ENCODE measurements at regions of chr1 and their contacts with region 1.

Region 1: GRCh38 chr1:8987881-8988617 is 38.2 kb downstream of the SLC2A7 start:
- DNase-seq: peak; percentile 28 to 73 (median 67)
- H3K4me3 ChIP-seq: no peak overlapping the region
- H3K27ac ChIP-seq: no peak overlapping the region
- H3K4me1 ChIP-seq: peaks cover 4% of the 10 kb centered on the region
- H3K27me3 ChIP-seq: no peaks in the 10 kb centered on the region
- CTCF ChIP-seq: peak; percentile 73 to 82 (median 77)
- EP300 ChIP-seq: no peak
- POLR2A ChIP-seq: no peak

Region 2: DNA sequence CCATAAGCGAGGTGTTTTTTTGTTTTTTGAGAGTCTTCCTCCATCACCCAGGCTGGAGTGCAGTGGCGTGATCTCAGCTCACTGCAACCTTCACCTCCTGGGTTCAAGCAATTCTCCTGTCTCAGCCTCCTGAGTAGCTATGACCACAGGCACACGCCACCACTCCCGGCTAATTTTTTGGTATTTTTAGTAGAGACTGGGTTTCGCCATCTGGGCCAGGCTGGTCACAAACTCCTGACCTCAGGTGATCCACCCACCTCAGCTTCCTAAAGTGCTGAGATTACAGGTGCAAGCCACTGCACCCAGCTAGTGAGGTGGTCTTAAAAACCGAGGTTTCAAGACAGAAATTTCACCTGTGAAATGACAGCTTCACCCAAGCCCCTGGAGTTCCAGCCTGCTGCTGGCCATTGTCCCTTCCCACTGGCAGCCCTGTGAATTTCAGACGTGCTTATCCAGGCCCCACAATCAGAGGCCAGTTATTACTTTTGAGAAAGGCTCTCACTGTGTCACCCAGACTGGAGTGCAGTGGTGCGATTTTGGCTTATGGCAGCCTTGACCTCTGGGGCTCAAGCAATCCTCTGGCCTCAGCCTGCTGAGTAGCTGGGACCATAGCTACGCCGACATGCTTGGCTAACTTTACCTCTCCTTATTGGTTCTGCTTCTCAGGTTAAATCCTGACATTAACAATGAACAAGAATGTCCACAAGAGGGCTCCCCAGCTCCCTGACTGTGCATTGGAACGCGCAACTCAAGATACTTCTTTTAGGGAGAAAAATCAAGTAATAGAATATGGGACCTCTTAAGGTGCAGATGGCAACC is 129.0 kb before region 1 on chr1:
- intact Hi-C with region 1: loop called in 2 of 4 experiments (anchors 2 to 5 kb)
- DNase-seq: peak in 1 of 5 donors; percentile 64
- H3K4me3 ChIP-seq: no peak overlapping the region
- H3K27ac ChIP-seq: no peak overlapping the region
- H3K4me1 ChIP-seq: no peaks in the 10 kb centered on the region
- H3K27me3 ChIP-seq: no peaks in the 10 kb centered on the region
- CTCF ChIP-seq: peak; percentile 32 to 60 (median 48)
- EP300 ChIP-seq: no peak
- POLR2A ChIP-seq: no peak

Region 3: DNA sequence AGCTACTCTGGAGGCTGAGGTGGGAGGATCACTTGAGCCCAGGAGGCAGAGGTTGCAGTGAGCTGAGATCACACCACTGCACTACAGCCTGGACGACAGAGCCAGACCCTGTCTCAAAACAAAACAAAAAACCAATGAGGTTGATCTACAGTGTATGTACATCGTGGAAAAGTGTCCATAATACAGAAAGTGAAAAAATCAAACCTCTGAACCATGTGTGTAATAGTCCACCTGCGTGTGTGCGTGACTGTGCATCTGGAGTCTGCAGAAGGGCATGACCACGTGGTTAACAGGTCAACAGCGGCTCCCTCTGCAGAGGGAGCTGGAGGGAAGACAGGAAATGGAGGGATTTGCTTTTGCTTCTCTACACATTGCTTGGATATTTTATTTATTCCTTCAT is 77.1 kb before region 1 on chr1:
- intact Hi-C with region 1: loop called in 1 of 4 experiments (anchors 5 kb)
- DNase-seq: no peak
- H3K4me3 ChIP-seq: no peak overlapping the region
- H3K27ac ChIP-seq: no peak overlapping the region
- H3K4me1 ChIP-seq: no peaks in the 10 kb centered on the region
- H3K27me3 ChIP-seq: no peaks in the 10 kb centered on the region
- CTCF ChIP-seq: no peak
- EP300 ChIP-seq: no peak
- POLR2A ChIP-seq: no peak

Region 4: GRCh38 chr1:8925406-8925805 is 62.6 kb before region 1 on chr1:
- intact Hi-C with region 1: loop called in 3 of 4 experiments (anchors 5 to 10 kb)
- DNase-seq: no peak
- H3K4me3 ChIP-seq: no peak overlapping the region
- H3K27ac ChIP-seq: no peak overlapping the region
- H3K4me1 ChIP-seq: no peaks in the 10 kb centered on the region
- H3K27me3 ChIP-seq: no peaks in the 10 kb centered on the region
- CTCF ChIP-seq: no peak
- EP300 ChIP-seq: no peak
- POLR2A ChIP-seq: no peak

Region 5: GRCh38 chr1:9101510-9102146 is 113.6 kb after region 1 on chr1:
- intact Hi-C with region 1: no loop called
- DNase-seq: peak; percentile 53 to 70 (median 61)
- H3K4me3 ChIP-seq: no peak overlapping the region
- H3K27ac ChIP-seq: no peak overlapping the region
- H3K4me1 ChIP-seq: no peaks in the 10 kb centered on the region
- H3K27me3 ChIP-seq: no peaks in the 10 kb centered on the region
- CTCF ChIP-seq: peak; percentile 49 to 59 (median 57)
- EP300 ChIP-seq: no peak
- POLR2A ChIP-seq: no peak

Measured in ovary (tissue), 10 donors.